ENCODE measurements at regions of chr11 and their contacts with region 1.

Region 1: GRCh38 chr11:16613512-16614381 is 124.7 kb upstream of the C11orf58 start:
- DNase-seq: peak; percentile 89 to 91
- H3K4me3 ChIP-seq: peak overlapping the region; percentile 55
- H3K4me3 Mint-ChIP-seq: peak overlapping the region; percentile 81
- H3K27ac Mint-ChIP-seq: peak overlapping the region; percentile 68
- H3K4me1 ChIP-seq: 0 out of 2 replicates have a peak, but pooled peaks cover 5% of the 10 kb centered on the region
- H3K4me1 Mint-ChIP-seq: peaks cover 7% of the 10 kb centered on the region
- H3K27me3 ChIP-seq: no peaks in the 10 kb centered on the region; the same call in 1 of the 2 replicates
- H3K27me3 Mint-ChIP-seq: peaks cover 2% of the 10 kb centered on the region
- CTCF ChIP-seq: peak; percentile 82 to 86

Region 2: GRCh38 chr11:15327786-15328231 is 1285.9 kb before region 1 on chr11:
- CTCF ChIA-PET with region 1: no interaction called
- POLR2A ChIA-PET with region 1: no interaction called
- intact Hi-C with region 1: loop called (anchors 2 kb)
- DNase-seq: peak; percentile 71 to 78
- H3K4me3 ChIP-seq: no peak overlapping the region
- H3K4me3 Mint-ChIP-seq: no peak overlapping the region
- H3K27ac Mint-ChIP-seq: no peak overlapping the region
- H3K4me1 ChIP-seq: no peaks in the 10 kb centered on the region
- H3K4me1 Mint-ChIP-seq: no peaks in the 10 kb centered on the region
- H3K27me3 ChIP-seq: peaks cover 2% of the 10 kb centered on the region; the same call in 1 of the 2 replicates
- H3K27me3 Mint-ChIP-seq: peaks cover 8% of the 10 kb centered on the region
- CTCF ChIP-seq: peak; percentile 67 to 92

Region 3: DNA sequence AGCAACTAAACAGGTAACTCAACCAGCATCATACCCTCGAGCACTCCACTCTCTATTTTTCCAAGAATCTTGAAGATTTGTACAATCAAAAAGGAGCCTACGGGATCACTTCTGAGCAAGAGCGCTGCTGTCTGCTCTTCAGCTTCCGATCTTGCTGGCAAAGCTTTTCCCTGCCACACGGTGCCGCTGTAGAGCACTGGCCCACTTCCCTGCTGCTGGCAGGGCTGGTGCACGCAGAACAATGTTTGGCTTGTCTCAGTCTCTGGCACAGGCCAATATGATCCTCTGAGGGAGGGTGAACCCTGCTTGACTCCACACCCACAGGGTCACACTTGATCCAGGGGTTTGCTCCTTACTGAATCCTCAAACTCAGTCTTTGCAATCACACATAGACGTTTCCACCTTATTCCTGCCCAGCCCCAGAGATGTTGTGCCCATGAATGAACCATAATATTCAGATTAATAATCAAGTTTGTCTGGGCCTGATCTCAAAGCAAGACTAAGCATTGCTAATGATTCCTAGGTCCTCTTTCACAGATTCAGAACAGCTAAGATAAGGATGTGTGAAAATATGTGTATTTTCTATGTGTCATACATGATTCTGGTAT is 794.0 kb before region 1 on chr11:
- CTCF ChIA-PET with region 1: interaction called, 20 read pairs
- POLR2A ChIA-PET with region 1: no interaction called
- intact Hi-C with region 1: loop called (anchors 2 kb)
- DNase-seq: peak; percentile 68 to 80
- H3K4me3 ChIP-seq: no peak overlapping the region
- H3K4me3 Mint-ChIP-seq: no peak overlapping the region
- H3K27ac Mint-ChIP-seq: no peak overlapping the region
- H3K4me1 ChIP-seq: no peaks in the 10 kb centered on the region
- H3K4me1 Mint-ChIP-seq: no peaks in the 10 kb centered on the region
- H3K27me3 ChIP-seq: no peaks in the 10 kb centered on the region
- H3K27me3 Mint-ChIP-seq: peaks cover 3% of the 10 kb centered on the region
- CTCF ChIP-seq: peak; percentile 90 to 95

Region 4: GRCh38 chr11:15852179-15852578 is 761.6 kb before region 1 on chr11:
- CTCF ChIA-PET with region 1: interaction called, 26 read pairs
- POLR2A ChIA-PET with region 1: no interaction called
- intact Hi-C with region 1: loop called (anchors 1 kb)
- DNase-seq: peak in 1 of 2 experiments; percentile 32
- H3K4me3 ChIP-seq: no peak overlapping the region
- H3K4me3 Mint-ChIP-seq: no peak overlapping the region
- H3K27ac Mint-ChIP-seq: no peak overlapping the region
- H3K4me1 ChIP-seq: no peaks in the 10 kb centered on the region; the same call in 1 of the 2 replicates
- H3K4me1 Mint-ChIP-seq: peaks cover 6% of the 10 kb centered on the region
- H3K27me3 ChIP-seq: no peaks in the 10 kb centered on the region
- H3K27me3 Mint-ChIP-seq: peaks cover 2% of the 10 kb centered on the region
- CTCF ChIP-seq: peak; percentile 48 to 64

Region 5: DNA sequence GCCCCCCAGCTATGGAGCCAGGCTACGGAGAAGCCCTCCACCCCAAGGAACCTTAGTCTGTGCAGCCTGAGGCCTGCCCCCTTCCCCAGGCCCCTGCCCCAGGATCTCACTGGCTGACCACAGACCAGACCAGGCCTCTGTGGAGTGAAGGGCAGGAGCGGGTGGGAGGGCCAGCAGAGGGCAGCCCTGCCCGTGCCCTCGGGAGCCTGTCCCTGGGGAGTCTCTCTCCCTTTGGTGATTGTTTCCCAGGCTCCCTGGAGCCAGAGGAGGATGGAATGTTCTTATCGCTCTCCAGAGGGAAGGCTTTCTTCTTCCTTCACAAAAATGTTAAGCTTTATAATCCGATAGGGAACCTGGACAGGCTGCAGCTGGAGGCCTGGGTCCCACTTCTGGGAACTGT is 712.7 kb before region 1 on chr11:
- CTCF ChIA-PET with region 1: no interaction called
- POLR2A ChIA-PET with region 1: no interaction called
- intact Hi-C with region 1: loop called (anchors 5 kb)
- DNase-seq: peak in 1 of 2 experiments; percentile 14
- H3K4me3 ChIP-seq: no peak overlapping the region
- H3K4me3 Mint-ChIP-seq: no peak overlapping the region
- H3K27ac Mint-ChIP-seq: peak overlapping the region; percentile 75
- H3K4me1 ChIP-seq: peaks cover 24% of the 10 kb centered on the region
- H3K4me1 Mint-ChIP-seq: peaks cover 21% of the 10 kb centered on the region
- H3K27me3 ChIP-seq: no peaks in the 10 kb centered on the region
- H3K27me3 Mint-ChIP-seq: no peaks in the 10 kb centered on the region
- CTCF ChIP-seq: peak in 1 of 2 experiments; percentile 23

Region 6: DNA sequence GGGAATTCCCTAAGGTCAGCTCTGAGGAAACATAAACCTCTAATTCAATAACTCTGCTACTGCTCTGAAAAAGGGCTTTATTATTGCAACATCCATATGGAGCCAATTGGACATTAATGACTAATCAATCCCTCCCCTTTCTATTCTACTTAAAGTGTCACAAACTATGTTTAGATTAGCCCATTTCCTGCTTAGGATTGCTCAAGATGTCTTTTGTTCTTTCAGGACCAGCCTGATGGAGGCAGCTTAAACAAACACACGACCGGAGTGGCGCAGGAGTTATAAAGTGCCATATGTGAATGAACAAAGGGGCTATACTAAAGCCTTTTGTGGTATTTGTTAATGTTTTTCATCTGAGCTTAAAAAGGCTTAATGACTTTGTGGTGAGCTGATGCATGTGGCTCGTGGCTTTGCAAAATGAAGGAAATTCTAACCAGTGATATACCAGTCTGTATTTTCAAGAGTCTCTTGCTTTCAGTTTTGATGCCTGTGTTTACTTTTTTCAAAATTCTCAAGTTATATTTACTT is 611.8 kb before region 1 on chr11:
- CTCF ChIA-PET with region 1: no interaction called
- POLR2A ChIA-PET with region 1: no interaction called
- intact Hi-C with region 1: loop called (anchors 5 kb)
- DNase-seq: peak; percentile 71 to 76
- H3K4me3 ChIP-seq: peak overlapping the region; percentile 14
- H3K4me3 Mint-ChIP-seq: peak overlapping the region; percentile 48
- H3K27ac Mint-ChIP-seq: peak overlapping the region; percentile 48
- H3K4me1 ChIP-seq: peaks cover 21% of the 10 kb centered on the region
- H3K4me1 Mint-ChIP-seq: peaks cover 22% of the 10 kb centered on the region
- H3K27me3 ChIP-seq: no peaks in the 10 kb centered on the region
- H3K27me3 Mint-ChIP-seq: no peaks in the 10 kb centered on the region
- CTCF ChIP-seq: no peak

Region 7: GRCh38 chr11:16191212-16191867 is 422.4 kb before region 1 on chr11:
- CTCF ChIA-PET with region 1: interaction called, 12 read pairs
- POLR2A ChIA-PET with region 1: no interaction called
- intact Hi-C with region 1: loop called (anchors 1 kb)
- DNase-seq: no peak
- H3K4me3 ChIP-seq: no peak overlapping the region
- H3K4me3 Mint-ChIP-seq: no peak overlapping the region
- H3K27ac Mint-ChIP-seq: peak overlapping the region; percentile 57
- H3K4me1 ChIP-seq: peaks cover 48% of the 10 kb centered on the region
- H3K4me1 Mint-ChIP-seq: peaks cover 43% of the 10 kb centered on the region
- H3K27me3 ChIP-seq: no peaks in the 10 kb centered on the region
- H3K27me3 Mint-ChIP-seq: no peaks in the 10 kb centered on the region
- CTCF ChIP-seq: peak; percentile 34 to 45

Region 8: GRCh38 chr11:16630651-16631050 is 16.9 kb after region 1 on chr11:
- CTCF ChIA-PET with region 1: no interaction called
- POLR2A ChIA-PET with region 1: no interaction called
- intact Hi-C with region 1: no loop called
- DNase-seq: no peak
- H3K4me3 ChIP-seq: no peak overlapping the region
- H3K4me3 Mint-ChIP-seq: no peak overlapping the region
- H3K27ac Mint-ChIP-seq: no peak overlapping the region
- H3K4me1 ChIP-seq: no peaks in the 10 kb centered on the region
- H3K4me1 Mint-ChIP-seq: no peaks in the 10 kb centered on the region
- H3K27me3 ChIP-seq: no peaks in the 10 kb centered on the region
- H3K27me3 Mint-ChIP-seq: peaks cover 12% of the 10 kb centered on the region
- CTCF ChIP-seq: no peak

Measured in Caco-2 (cell line).